Activated CD4-positive, alpha-beta T cell treated with anti-CD3 and anti-CD28 coated beads, Interleukin-2, amount 10 ng/mL, durations not matched to agents 24 days and 14 days (primary cell): ENCODE measurements at regions of chr21 and their contacts with region 1.

Region 1: DNA sequence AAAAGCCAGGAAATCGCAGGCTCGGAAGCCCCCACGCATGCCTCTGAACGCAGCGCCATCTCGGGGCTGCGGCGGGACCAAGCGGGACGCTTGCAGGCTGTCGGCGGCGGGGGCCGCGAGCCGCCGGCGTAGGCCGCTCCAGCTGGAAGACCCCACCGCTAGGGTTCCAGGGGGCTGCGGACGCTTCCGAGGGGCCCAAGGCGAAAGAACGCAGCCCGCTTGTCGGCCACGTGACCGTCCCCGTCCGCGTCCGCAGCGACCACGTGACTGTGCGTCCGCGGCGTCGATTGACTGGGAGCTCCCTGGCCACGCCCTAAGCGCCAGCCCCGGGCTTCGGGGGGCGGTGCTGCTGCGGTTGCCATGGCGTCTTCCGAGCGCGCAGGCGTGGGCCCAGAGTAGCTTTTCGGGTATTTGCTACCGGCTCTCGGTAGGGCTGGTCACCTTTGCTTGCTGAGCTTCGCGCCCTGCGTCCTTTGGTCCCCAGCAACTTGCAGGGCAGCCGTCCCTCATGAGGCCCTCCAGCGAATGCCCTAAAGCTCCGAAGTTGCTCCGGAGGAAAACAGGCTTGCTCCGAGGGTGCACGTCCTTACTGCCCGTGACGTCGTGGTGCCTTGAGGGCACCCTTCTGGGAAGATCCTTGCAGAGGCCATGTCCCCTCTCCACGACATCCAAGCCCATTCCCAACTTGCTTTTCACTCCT is 197.2 kb downstream of the DYRK1A start:
- DNase-seq: peak; percentile 98
- H3K4me3 Mint-ChIP-seq: peak overlapping the region; percentile 94
- H3K27ac Mint-ChIP-seq: peak overlapping the region; percentile 100
- H3K4me1 Mint-ChIP-seq: peaks cover 23% of the 10 kb centered on the region
- H3K27me3 Mint-ChIP-seq: peaks cover 9% of the 10 kb centered on the region

Region 2: DNA sequence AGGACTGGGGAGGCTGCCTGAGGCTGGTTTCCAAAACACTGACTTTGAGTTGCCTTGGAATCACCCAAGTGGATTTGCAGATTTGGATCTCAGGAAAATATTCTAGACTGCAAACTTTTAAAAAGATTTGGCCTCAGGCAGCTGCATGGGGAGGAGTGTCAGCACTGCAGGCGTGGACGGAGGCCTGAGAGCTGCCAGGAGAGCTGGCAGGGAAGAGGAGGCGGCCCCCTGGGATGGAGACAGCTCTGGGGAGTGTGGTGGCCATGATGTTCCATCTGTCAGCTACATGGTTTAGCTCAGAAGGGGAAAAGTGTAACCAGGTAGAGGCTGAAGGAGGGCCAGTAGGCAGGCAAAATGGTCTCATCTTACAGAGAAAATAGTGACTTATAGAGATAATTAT is 368.7 kb before region 1 on chr21:
- intact Hi-C with region 1: no loop called
- DNase-seq: no peak
- H3K4me3 Mint-ChIP-seq: no peak overlapping the region
- H3K27ac Mint-ChIP-seq: no peak overlapping the region
- H3K4me1 Mint-ChIP-seq: peaks cover 7% of the 10 kb centered on the region
- H3K27me3 Mint-ChIP-seq: no peaks in the 10 kb centered on the region

Region 3: DNA sequence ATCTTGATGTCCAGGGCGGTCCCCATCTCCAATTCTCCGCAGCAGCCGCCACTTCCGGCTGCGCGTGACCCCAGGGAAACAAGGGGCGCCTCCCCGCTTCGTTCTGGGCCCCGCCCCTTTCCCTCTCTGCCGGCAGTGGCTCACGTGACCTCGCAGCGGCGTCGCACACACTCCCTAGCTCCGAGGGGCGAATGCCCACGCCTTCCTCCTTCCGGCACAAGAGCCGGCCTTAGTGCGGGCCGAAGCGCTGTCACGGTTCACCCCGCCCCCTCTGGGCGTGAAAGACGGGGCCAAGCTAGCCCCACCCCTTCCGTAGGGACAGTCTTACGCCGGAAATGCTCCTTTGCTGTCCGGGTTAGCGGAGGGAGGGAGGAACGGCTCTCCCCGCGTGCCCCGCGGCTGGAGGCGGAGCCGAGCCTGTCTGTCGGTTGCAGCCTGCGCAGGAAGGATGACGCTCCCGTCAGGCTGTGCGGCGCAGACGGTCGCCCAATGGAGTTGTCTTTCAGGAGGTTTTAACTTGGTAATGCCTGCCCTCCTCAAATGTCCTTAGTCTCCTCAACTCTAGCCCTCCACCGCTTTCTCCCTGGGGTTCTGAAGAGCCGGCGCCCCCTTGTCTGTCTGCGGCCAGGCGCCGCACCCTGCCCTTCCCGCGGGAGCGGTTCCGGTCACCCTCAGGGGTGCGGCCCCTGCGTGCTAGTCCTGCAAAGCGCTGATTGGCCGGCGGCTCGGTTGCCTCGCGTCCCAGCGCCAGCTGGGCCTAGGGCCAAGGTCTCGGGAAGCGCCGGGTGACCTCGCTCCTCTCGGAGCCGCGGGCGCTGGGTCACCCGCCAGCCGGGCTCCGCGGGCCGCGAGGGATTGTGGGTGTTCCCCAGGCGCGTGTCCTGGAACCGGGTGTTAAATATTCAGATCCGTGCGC is 296.3 kb before region 1 on chr21 and contains the start of gene VPS26C:
- intact Hi-C with region 1: loop called (anchors 1 kb)
- DNase-seq: peak; percentile 100
- H3K4me3 Mint-ChIP-seq: peak within 1 kb of the TSS; percentile 97
- H3K27ac Mint-ChIP-seq: peak within 1 kb of the TSS; percentile 98
- H3K4me1 Mint-ChIP-seq: peaks cover 34% of the 10 kb centered on the region
- H3K27me3 Mint-ChIP-seq: peaks cover 2% of the 10 kb centered on the region
- total RNA-seq, gene VPS26C: 52.8 and 60.0 TPM in 2 replicates

Region 4: GRCh38 chr21:37503848-37504467 is 59.8 kb before region 1 on chr21:
- intact Hi-C with region 1: loop called (anchors 5 kb)
- DNase-seq: no peak
- H3K4me3 Mint-ChIP-seq: peak overlapping the region; percentile 11
- H3K27ac Mint-ChIP-seq: peak overlapping the region; percentile 81
- H3K4me1 Mint-ChIP-seq: peaks cover 23% of the 10 kb centered on the region
- H3K27me3 Mint-ChIP-seq: no peaks in the 10 kb centered on the region